ENCODE measurements at regions of chr20 and their contacts with region 1.

Region 1: DNA sequence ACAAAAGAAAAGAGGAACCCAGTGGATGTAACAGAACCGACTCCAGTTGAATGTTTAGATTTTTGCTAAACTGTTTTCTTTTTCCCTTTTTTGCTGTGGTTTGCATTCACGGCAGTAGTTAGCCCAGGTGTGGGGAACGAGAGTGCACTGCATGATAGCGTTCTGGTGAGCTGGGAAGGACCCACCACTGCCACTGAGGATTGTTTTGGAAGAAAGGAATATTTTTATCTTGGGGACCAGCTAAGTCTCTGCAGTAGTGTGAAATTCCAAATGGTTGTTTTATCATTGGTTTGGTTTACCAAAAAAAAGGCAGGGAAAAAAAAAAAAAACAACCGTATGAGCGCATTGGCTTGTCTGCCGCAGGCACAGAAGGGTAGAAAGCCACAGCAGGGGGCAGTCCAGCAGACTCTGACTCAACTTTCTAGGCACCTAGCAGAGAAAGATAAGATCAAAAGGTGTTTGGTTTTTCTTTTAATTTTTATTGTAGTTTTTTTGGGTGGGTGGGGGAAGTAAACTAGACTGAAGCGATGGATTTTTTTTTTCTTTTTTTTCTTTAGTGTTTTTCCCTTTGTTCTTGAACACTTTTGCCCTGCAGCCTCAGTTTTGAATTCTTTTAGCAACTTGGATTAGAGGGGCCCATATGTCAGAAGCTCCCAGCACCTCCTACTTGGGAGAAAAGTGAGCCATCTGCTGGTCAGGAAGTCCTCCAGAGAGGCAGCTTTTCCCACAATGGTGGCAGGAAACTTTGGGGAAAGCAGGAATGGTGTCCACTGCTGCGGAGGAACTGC is 13.5 kb upstream of the RAB5IF start:
- DNase-seq: no peak
- ATAC-seq: peak; percentile 61

Region 2: DNA sequence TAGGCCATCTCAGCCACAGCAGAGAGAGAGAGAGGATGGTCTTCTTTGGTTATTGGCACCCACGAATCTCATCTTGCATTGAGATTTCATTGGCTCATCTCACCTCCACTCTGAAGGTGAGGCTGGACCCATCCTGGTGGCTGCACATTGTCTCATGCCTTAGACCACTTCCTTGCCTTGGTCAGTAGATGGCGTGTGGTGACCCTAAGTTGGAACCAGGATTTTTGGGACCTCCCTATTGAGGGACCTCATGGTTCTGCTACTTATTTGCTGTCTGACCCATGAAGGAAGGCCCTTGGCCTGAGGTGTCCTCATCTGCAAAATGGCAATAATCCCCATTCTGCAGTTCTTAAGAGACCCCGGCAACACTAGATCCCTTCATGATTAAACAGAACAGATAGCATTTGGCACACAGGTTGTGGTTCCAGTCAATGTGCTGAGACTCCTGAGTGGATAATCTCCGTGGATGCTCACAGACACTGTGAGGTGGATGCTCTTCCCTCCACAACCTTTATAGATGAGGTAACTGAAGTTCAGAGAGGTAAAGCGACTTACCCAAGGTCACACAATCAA is 377.3 kb before region 1 on chr20:
- intact Hi-C with region 1: loop called (anchors 10 kb)
- DNase-seq: no peak
- ATAC-seq: no peak

Region 3: DNA sequence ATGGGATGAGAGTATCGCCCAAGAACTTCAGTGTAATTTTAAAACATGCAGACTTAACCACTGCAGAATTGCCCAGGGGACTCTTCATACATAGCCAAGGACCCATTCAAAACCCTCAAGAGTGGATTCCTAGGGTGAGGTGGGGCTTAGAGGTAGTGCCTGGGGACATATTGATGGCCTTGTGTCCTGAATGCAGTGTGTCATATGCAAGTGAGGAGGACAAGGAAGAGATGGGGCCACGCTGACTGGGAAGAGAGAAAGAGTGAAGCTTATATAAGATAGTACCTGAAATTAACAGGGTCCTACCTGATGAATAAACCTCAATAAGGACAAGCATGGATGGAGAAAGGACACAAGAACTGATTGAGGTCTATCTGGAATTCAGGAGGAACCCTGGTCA is 36.8 kb before region 1 on chr20:
- intact Hi-C with region 1: loop called (anchors 5 kb)
- DNase-seq: no peak
- ATAC-seq: no peak

Measured in Right ventricle myocardium superior (tissue), 1 donor.